Esophagus squamous epithelium (tissue), 5 donors: ENCODE measurements at regions of chrX and their contacts with region 1.

Region 1: GRCh38 chrX:47384502-47384901 is 14.1 kb downstream of the ZNF157 start:
- DNase-seq: no peak
- H3K4me3 ChIP-seq: no peak overlapping the region
- H3K27ac ChIP-seq: no peak overlapping the region
- H3K4me1 ChIP-seq: no peaks in the 10 kb centered on the region
- H3K27me3 ChIP-seq: no peaks in the 10 kb centered on the region
- CTCF ChIP-seq: peak in 5 of 6 experiments; percentile 63 to 75 (median 72)
- POLR2A ChIP-seq: no peak

Region 2: DNA sequence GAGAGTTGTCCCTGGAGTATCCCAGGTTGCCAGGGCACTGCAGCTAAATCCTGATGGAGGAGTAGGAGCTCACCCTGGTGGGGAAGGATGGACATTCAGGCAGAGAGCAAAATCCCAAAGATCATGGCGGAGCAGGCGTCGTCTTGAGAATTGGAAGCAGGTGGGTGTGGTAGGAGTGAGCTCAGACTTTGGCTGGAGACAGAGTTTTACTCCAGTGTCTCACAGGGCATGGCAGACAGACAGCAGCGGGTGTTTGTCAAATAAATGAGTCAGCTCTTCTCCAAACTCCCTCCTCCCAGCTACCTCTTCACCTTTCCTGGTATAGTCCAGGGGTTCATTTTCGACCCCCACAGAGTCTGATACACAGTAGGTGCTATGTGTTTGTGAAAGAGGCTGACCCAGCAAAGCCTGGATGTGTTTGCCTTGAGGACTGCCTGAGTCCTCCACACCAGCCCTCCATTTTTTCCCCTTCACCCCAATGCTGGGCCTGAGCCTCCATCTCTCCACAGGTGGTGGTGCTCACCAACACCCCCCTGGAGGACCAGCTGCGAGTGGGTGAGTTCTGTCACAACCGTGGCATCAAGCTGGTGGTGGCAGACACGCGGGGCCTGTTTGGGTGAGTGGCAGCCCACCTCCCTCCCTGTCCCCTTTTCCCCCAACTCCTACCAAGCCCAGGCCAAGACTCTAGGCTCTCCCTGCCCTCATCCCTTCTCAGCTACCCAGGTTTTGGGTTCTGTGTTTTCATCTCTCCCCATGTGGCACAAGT is 183.9 kb before region 1 on chrX:
- intact Hi-C with region 1: loop called (anchors 10 kb)
- DNase-seq: no peak
- H3K4me3 ChIP-seq: no peak overlapping the region
- H3K27ac ChIP-seq: peak overlapping the region; percentile 68 to 85 (median 80)
- H3K4me1 ChIP-seq: peaks cover 6 to 57% (median 28%) of the 10 kb centered on the region in 3 donors
- H3K27me3 ChIP-seq: no peaks in the 10 kb centered on the region
- CTCF ChIP-seq: peak in 5 of 6 experiments; percentile 7 to 53 (median 17)
- POLR2A ChIP-seq: no peak

Region 3: DNA sequence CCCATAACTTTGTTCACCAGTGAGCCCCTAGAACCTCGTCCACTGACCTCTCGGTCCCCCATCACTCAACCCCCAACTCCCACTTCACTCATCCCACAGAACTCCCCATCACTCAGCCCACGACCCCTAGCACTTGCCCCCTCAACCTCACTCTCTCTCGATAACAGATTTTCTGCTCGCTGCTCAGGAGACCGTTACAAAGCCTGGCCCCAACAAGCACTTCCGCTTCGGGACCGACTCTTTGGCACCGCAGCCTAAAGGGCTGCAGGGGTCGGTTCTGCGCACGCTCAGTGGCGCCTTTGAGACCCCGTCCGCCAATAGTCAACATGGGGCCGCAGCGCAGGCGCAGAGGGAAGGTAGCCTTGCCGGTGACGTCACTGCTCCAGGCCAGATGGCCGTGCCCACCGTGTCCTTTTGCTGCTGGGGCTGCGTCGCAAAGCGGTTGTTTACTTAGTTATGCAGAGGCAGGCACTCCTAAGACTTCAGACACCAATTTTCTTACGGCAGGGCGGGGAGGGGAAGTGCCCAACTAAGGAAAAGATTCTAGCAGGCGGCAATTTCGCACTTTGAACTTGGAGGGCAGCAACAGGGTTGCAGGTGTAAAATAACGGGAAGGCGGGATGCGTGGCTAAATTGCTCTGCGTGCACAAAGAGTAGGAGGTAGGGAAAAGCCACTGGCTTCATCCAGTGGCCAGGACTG is 619.4 kb after region 1 on chrX and contains the start of gene ZNF182:
- intact Hi-C with region 1: no loop called
- DNase-seq: peak; percentile 50
- H3K4me3 ChIP-seq: peak within 1 kb of the TSS; percentile 36 to 72 (median 54)
- H3K27ac ChIP-seq: peak within 1 kb of the TSS; percentile 62 to 85 (median 72)
- H3K4me1 ChIP-seq: peaks cover 0 to 18% (median 0%) of the 10 kb centered on the region in 3 donors
- H3K27me3 ChIP-seq: no peaks in the 10 kb centered on the region
- CTCF ChIP-seq: peak in 1 of 6 experiments; percentile 9
- POLR2A ChIP-seq: peak in 2 of 4 donors; percentile 21 to 63
- total RNA-seq, gene ZNF182: 0.80 to 3.2 (median 1.4) TPM